PC-3 (cell line): ENCODE measurements at regions of chr15 and their contacts with region 1.

Region 1: DNA sequence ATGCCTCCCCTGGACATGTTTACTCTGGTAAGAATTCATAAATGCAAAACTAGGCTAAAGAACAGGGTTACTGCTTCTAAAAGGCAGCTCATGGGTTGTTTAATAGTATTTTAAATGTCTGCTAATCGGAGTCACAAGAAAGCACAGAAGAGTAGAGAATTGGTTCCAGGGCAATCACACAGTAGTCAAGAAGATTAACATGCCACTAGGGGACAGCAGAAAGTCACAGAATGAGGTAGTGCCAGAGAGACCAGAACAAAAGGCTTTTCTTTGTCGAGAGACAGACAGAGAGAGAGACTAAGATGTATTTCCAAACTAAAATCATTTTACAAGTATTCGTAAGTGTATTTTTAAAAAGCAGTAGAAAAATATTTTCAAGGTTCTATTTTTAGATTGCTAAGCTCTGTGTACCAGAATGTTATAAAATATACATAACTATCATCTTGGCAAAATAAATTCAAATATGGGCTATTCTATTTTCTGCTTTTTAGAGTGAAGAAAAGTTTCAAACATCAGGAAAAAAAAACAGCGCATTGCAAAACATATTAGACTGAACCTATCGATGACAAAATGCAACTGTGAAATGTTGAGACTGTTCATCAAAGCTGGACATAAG is 78.3 kb upstream of the CDIN1 start:
- DNase-seq: peak; percentile 87
- ATAC-seq: peak; percentile 95
- H3K4me3 ChIP-seq: no peak overlapping the region
- H3K27ac ChIP-seq: no peak overlapping the region
- H3K4me1 ChIP-seq: peaks cover 39% of the 10 kb centered on the region
- H3K27me3 ChIP-seq: no peaks in the 10 kb centered on the region
- CTCF ChIP-seq: peak; percentile 95

Region 2: DNA sequence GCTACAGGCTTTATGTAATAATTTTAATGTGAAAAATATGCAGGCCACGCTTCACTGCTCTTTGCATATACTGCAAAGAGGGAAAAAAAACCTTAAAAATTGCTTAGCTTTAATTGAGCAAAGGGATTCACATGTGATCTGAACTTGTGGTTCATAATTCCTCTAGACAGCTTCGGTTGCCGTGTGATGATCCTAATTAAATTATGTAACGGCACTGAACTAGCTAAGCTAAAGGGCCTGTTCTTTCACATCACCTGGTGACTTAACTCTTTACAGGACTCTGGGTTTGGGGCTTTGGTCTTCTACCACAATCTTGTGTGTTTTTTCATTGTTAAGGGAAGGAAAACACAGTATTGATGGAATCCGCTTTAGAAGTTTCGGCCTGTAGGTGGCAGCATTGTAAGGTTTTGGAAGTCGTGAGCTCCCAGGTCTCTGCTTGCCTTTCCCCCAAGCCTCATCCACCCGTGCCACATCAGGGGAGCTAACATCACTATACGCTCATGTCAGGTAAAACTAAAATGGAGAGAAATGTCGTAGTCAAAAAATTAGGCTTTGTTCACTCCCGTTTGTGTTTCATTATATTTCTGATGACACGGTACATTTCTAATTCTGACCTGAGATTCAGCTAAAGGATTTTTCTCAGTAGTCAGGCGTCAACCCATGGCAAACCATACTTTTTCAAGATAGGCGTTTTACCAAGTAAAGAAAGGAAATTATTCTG is 749.6 kb before region 1 on chr15:
- CTCF ChIA-PET with region 1: no interaction called
- POLR2A ChIA-PET with region 1: no interaction called
- intact Hi-C with region 1: loop called (anchors 5 kb)
- DNase-seq: peak; percentile 85
- ATAC-seq: peak; percentile 69
- H3K4me3 ChIP-seq: 0 out of 2 replicates have a peak overlapping the region, but pooled peaks have one; percentile 11
- H3K27ac ChIP-seq: no peak overlapping the region
- H3K4me1 ChIP-seq: peaks cover 36% of the 10 kb centered on the region
- H3K27me3 ChIP-seq: no peaks in the 10 kb centered on the region
- CTCF ChIP-seq: peak; percentile 88

Region 3: GRCh38 chr15:36278219-36278618 is 223.0 kb before region 1 on chr15:
- CTCF ChIA-PET with region 1: no interaction called
- POLR2A ChIA-PET with region 1: no interaction called
- intact Hi-C with region 1: loop called (anchors 5 kb)
- DNase-seq: peak; percentile 76
- ATAC-seq: peak; percentile 79
- H3K4me3 ChIP-seq: no peak overlapping the region
- H3K27ac ChIP-seq: no peak overlapping the region
- H3K4me1 ChIP-seq: no peaks in the 10 kb centered on the region
- H3K27me3 ChIP-seq: no peaks in the 10 kb centered on the region
- CTCF ChIP-seq: peak; percentile 78

Region 4: GRCh38 chr15:36591536-36592411 is 90.6 kb after region 1 on chr15:
- CTCF ChIA-PET with region 1: interaction called, 4 read pairs
- POLR2A ChIA-PET with region 1: interaction called, 13 read pairs
- intact Hi-C with region 1: loop called (anchors 5 kb)
- DNase-seq: peak; percentile 88
- ATAC-seq: peak; percentile 37
- H3K4me3 ChIP-seq: peak overlapping the region; percentile 17; the same call in 1 of the 2 replicates
- H3K27ac ChIP-seq: peak overlapping the region; percentile 95
- H3K4me1 ChIP-seq: peaks cover 69% of the 10 kb centered on the region
- H3K27me3 ChIP-seq: no peaks in the 10 kb centered on the region
- CTCF ChIP-seq: peak; percentile 33; the same call in 1 of the 2 replicates

Region 5: DNA sequence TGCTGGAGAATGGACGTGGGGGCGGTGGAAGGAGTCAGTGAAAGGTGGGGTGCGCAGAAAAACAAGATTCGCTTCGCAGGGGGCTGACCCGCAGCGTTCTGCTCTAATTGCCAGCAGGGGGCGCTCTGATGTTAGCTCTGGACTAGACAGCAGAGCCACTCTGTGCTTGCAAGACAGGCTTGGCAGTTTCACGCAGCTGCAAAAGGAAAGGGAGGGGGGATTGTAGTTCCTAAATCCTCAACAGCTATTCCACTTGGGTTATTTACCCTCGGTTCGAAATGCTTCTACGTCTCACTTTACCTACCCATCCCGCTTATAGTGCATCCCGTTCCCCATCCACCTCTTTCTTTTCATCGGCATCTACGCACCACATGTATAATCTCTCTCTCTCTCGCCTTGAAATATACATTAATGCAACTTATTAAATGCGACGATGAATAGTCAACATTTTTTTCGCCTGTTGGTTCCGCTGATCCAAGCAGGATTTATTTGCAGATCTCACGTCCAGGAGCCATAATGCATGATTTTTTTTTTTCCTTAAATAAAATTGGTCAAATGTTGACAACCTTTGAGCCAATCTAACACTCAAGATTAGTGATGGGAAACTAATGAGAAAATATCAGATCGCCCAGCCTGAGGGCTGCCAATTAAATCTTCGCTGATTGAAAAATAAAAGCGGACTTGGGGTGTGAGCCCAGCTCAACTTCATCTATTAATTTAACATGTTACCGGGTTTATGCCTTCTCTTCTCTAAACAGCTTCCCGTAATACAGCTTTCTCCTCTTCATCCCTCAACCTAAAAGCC is 382.7 kb after region 1 on chr15:
- CTCF ChIA-PET with region 1: no interaction called
- POLR2A ChIA-PET with region 1: no interaction called
- intact Hi-C with region 1: loop called (anchors 2 kb)
- DNase-seq: peak; percentile 88
- ATAC-seq: peak; percentile 92
- H3K4me3 ChIP-seq: peak overlapping the region; percentile 70
- H3K27ac ChIP-seq: no peak overlapping the region
- H3K4me1 ChIP-seq: peaks cover 12% of the 10 kb centered on the region
- H3K27me3 ChIP-seq: peaks cover 45% of the 10 kb centered on the region
- CTCF ChIP-seq: peak; percentile 89

Region 6: GRCh38 chr15:37880009-37880834 is 1379.1 kb after region 1 on chr15:
- CTCF ChIA-PET with region 1: no interaction called
- POLR2A ChIA-PET with region 1: no interaction called
- intact Hi-C with region 1: loop called (anchors 5 kb)
- DNase-seq: peak; percentile 59
- ATAC-seq: peak; percentile 32; the same call in 1 of the 2 replicates
- H3K4me3 ChIP-seq: no peak overlapping the region
- H3K27ac ChIP-seq: no peak overlapping the region
- H3K4me1 ChIP-seq: peaks cover 26% of the 10 kb centered on the region
- H3K27me3 ChIP-seq: peaks cover 49% of the 10 kb centered on the region
- CTCF ChIP-seq: peak; percentile 96